ENCODE measurements at regions of chr14 and their contacts with region 1.

Region 1: GRCh38 chr14:50139192-50139591 is 22.8 kb upstream of the VCPKMT start:
- H3K4me3 Mint-ChIP-seq: no peak overlapping the region
- H3K27ac Mint-ChIP-seq: no peak overlapping the region
- H3K4me1 Mint-ChIP-seq: no peaks in the 10 kb centered on the region
- H3K27me3 Mint-ChIP-seq: no peaks in the 10 kb centered on the region

Region 2: GRCh38 chr14:49381778-49382177 is 757.4 kb before region 1 on chr14:
- intact Hi-C with region 1: no loop called
- H3K4me3 Mint-ChIP-seq: no peak overlapping the region
- H3K27ac Mint-ChIP-seq: no peak overlapping the region
- H3K4me1 Mint-ChIP-seq: no peaks in the 10 kb centered on the region
- H3K27me3 Mint-ChIP-seq: no peaks in the 10 kb centered on the region

Region 3: GRCh38 chr14:50109342-50109741 is 29.9 kb before region 1 on chr14:
- intact Hi-C with region 1: no loop called
- H3K4me3 Mint-ChIP-seq: no peak overlapping the region
- H3K27ac Mint-ChIP-seq: no peak overlapping the region
- H3K4me1 Mint-ChIP-seq: no peaks in the 10 kb centered on the region
- H3K27me3 Mint-ChIP-seq: no peaks in the 10 kb centered on the region

Region 4: GRCh38 chr14:50173891-50174290 is 34.7 kb after region 1 on chr14:
- intact Hi-C with region 1: loop called (anchors 5 kb)
- H3K4me3 Mint-ChIP-seq: no peak overlapping the region
- H3K27ac Mint-ChIP-seq: no peak overlapping the region
- H3K4me1 Mint-ChIP-seq: no peaks in the 10 kb centered on the region
- H3K27me3 Mint-ChIP-seq: no peaks in the 10 kb centered on the region

Region 5: DNA sequence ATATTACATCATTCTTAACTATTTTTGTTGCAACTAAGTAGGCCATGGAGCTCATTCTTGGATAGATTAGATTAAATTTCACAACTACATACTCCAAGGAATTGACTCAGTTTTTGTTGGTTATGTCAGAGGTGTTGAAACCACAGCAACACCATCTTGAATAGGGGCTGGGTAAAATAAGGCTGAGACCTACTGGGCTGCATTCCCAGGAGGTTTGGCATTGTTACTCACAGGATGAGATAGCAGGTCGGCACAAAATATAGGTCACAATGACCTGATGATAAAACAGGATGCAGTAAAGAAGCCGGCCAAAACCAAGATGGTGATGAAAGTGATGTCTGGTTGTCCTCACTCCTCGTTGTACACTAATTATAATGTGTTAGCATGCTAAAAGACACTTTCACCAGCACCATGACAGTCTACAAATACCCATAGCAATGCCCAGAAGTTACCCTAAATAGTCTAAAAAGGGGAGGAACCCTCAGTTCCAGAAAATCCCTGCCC is 193.9 kb after region 1 on chr14:
- intact Hi-C with region 1: no loop called
- H3K4me3 Mint-ChIP-seq: no peak overlapping the region
- H3K27ac Mint-ChIP-seq: no peak overlapping the region
- H3K4me1 Mint-ChIP-seq: peaks cover 14% of the 10 kb centered on the region
- H3K27me3 Mint-ChIP-seq: no peaks in the 10 kb centered on the region

Measured in dendritic cell treated with granulocyte-macrophage colony-stimulating factor and Interleukin-4, amounts not matched to agents 40 ng/mL and 50 ng/mL, for 4 days (primary cell).